Sciatic nerve (tissue), 2 donors: ENCODE measurements at regions of chr1 and their contacts with region 1.

Region 1: GRCh38 chr1:170959385-170959784 is 24.1 kb downstream of the MROH9 start:
- DNase-seq: no peak
- ATAC-seq: no peak

Region 2: GRCh38 chr1:171913385-171913784 is 954.0 kb after region 1 on chr1:
- intact Hi-C with region 1: loop called (anchors 5 kb)
- DNase-seq: no peak
- ATAC-seq: no peak